Caco-2 (cell line): ENCODE measurements at regions of chr4 and their contacts with region 1.

Region 1: DNA sequence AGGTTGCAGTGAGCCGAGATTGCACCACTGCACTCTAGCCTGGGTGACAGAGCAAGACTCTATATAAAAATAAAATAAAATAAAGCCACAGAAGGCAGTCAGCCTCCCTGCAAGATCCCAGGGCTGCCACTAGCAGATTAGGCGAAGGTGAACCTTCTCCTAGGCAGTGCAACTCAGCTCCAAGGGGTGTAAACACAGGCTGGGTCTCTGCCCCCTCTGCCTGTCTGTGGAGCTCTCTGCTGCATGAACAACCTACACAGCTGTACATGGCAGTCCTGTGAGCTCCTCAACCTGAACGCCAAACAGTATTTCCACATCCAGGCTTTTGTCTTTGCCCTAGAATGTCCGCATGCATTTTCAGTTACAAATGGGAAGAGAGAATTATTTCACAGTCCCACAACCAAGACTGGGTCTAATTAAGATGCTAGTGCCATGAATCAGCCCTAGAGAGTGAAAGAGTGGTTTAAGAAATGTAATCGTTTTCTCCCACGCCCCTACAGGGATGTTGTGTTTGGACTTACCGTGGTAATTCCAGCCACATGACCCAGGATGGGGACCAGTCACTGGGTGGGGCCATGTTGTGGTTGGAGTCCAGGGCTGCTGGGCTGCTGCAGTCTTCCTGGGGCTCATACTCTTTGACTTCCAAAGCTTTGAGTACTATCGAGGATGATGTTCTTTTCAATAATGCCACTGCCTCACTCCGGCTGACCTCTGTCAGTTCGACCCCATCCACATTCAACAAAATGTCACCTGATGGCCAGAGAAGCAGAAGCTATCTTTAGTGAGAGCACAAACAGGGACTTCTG is 99.0 kb downstream of the FIP1L1 start:
- DNase-seq: peak; percentile 66 to 73
- H3K4me3 ChIP-seq: peak overlapping the region; percentile 17
- H3K4me3 Mint-ChIP-seq: peak overlapping the region; percentile 70
- H3K27ac Mint-ChIP-seq: peak overlapping the region; percentile 79
- H3K4me1 ChIP-seq: peaks cover 37% of the 10 kb centered on the region
- H3K4me1 Mint-ChIP-seq: peaks cover 20% of the 10 kb centered on the region
- H3K27me3 ChIP-seq: no peaks in the 10 kb centered on the region
- H3K27me3 Mint-ChIP-seq: no peaks in the 10 kb centered on the region
- CTCF ChIP-seq: no peak

Region 2: DNA sequence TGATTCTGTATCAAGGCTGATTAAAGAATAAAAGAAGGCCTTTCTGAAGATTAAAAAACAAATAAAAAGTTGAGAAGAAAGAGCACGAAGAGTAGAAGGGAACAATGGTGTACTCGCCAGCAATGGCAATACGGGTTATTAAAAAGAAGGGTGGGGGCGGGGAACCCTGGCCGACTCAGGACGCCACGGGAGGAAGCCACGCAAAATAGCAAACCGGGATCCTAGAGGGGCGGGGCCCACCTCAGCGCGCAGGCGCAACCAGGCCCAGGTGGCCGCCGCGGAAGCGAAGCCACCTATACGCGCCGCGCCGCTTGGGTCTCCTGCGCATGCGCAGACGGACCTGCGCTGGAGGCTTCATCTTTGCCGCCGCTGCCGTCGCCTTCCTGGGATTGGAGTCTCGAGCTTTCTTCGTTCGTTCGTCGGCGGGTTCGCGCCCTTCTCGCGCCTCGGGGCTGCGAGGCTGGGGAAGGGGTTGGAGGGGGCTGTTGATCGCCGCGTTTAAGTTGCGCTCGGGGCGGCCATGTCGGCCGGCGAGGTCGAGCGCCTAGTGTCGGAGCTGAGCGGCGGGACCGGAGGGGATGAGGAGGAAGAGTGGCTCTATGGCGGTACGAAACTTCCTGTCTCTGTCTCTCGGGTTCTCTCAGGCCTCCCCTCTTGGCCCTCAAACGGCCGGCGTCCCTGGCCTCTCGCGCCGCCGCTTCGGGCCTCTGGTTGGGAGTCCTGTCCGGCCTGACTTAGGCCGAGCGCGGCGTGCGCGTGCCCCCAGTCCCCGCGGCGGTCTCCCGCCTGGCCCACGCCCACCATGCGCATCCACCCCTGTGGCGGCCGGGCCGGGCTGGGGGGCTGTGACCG is 98.9 kb before region 1 on chr4 and contains the start of gene FIP1L1:
- CTCF ChIA-PET with region 1: no interaction called
- POLR2A ChIA-PET with region 1: no interaction called
- intact Hi-C with region 1: loop called (anchors 5 kb)
- DNase-seq: peak; percentile 93 to 96
- H3K4me3 ChIP-seq: peak within 1 kb of the TSS; percentile 78
- H3K4me3 Mint-ChIP-seq: peak within 1 kb of the TSS; percentile 98
- H3K27ac Mint-ChIP-seq: peak within 1 kb of the TSS; percentile 98
- H3K4me1 ChIP-seq: peaks cover 14% of the 10 kb centered on the region; the same call in 1 of the 2 replicates
- H3K4me1 Mint-ChIP-seq: peaks cover 16% of the 10 kb centered on the region
- H3K27me3 ChIP-seq: no peaks in the 10 kb centered on the region
- H3K27me3 Mint-ChIP-seq: no peaks in the 10 kb centered on the region
- CTCF ChIP-seq: no peak
- total RNA-seq, gene FIP1L1: 62.5 and 69.4 TPM in 2 replicates

Region 3: DNA sequence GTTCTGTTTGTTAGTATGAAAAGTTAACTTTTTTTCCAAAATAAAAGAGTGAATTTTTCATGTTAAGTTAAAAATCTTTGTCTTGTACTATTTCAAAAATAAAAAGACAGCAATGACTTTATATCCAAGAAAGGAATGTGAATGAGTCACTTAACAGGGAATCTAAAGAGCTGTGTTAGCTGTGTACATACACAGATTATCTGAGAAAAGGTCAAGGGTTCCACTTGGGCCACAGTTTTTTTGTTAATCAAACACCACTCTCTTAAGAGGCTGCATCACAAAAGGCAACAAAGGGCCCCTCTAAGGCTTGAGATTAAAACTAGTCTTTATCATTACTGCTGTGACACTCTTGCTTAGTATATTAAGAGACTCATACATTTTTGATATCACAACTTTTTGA is 16.9 kb before region 1 on chr4:
- CTCF ChIA-PET with region 1: no interaction called
- POLR2A ChIA-PET with region 1: no interaction called
- intact Hi-C with region 1: loop called (anchors 2 kb)
- DNase-seq: peak; percentile 59 to 60
- H3K4me3 ChIP-seq: no peak overlapping the region
- H3K4me3 Mint-ChIP-seq: peak overlapping the region; percentile 34
- H3K27ac Mint-ChIP-seq: peak overlapping the region; percentile 75
- H3K4me1 ChIP-seq: peaks cover 50% of the 10 kb centered on the region
- H3K4me1 Mint-ChIP-seq: peaks cover 20% of the 10 kb centered on the region
- H3K27me3 ChIP-seq: no peaks in the 10 kb centered on the region
- H3K27me3 Mint-ChIP-seq: no peaks in the 10 kb centered on the region
- CTCF ChIP-seq: no peak

Region 4: GRCh38 chr4:53490965-53491622 is 14.7 kb after region 1 on chr4:
- CTCF ChIA-PET with region 1: no interaction called
- POLR2A ChIA-PET with region 1: no interaction called
- intact Hi-C with region 1: loop called (anchors 2 kb)
- DNase-seq: peak; percentile 49
- H3K4me3 ChIP-seq: no peak overlapping the region
- H3K4me3 Mint-ChIP-seq: no peak overlapping the region
- H3K27ac Mint-ChIP-seq: no peak overlapping the region
- H3K4me1 ChIP-seq: no peaks in the 10 kb centered on the region
- H3K4me1 Mint-ChIP-seq: no peaks in the 10 kb centered on the region
- H3K27me3 ChIP-seq: no peaks in the 10 kb centered on the region
- H3K27me3 Mint-ChIP-seq: no peaks in the 10 kb centered on the region
- CTCF ChIP-seq: peak; percentile 53 to 71

Region 5: DNA sequence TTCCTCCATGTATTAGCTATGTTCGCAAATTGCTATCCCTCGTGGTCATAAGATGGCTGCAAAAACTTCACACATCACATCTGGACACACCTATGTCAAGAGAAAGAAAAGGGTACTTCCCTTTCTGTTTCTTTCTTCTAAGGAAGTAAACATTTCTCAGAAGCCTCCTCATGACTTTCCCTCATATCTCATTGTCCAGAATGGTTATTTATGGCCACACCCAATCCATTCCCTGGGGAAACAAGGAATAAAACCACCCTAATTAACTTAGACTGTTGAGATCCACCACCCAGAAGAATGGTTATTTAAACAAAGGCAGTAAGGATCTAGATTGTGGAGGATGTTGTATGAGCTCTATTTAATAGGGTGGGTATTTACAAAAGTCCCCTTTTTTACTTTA is 275.7 kb after region 1 on chr4:
- CTCF ChIA-PET with region 1: no interaction called
- POLR2A ChIA-PET with region 1: no interaction called
- intact Hi-C with region 1: no loop called
- DNase-seq: no peak
- H3K4me3 ChIP-seq: no peak overlapping the region
- H3K4me3 Mint-ChIP-seq: no peak overlapping the region
- H3K27ac Mint-ChIP-seq: no peak overlapping the region
- H3K4me1 ChIP-seq: no peaks in the 10 kb centered on the region
- H3K4me1 Mint-ChIP-seq: no peaks in the 10 kb centered on the region
- H3K27me3 ChIP-seq: no peaks in the 10 kb centered on the region
- H3K27me3 Mint-ChIP-seq: no peaks in the 10 kb centered on the region
- CTCF ChIP-seq: no peak